ENCODE measurements at regions of chr6 and their contacts with region 1.

Region 1: DNA sequence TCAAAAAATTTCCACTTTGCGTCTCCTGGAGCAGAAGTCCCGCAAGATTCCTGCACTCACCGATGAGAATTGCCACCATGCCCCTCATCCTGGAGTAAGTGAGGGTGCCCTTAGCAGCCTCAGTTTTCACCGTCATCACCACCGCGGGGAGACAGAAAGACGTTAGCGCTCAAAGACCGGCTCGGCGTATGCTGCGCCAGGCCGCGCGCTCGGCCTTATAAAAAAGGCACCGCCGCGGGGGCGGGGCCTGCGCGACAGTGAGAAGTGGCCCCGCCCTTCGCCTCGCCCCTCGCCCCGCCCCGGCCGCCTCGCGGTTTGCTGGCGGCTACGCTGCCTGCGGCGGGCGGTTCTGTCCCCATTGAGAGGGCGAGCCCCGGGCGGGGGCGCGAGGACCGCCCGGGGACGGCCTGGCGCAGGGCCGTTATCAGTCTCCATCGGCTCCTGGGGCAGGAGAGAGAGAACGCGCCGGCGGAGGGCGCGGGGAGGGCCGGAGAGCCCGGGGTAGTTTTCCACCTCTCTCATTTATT is 122.3 kb upstream of the SLC2A12 start:
- DNase-seq: peak; percentile 94
- ATAC-seq: peak; percentile 83
- H3K4me3 Mint-ChIP-seq: peak overlapping the region; percentile 97
- H3K27ac Mint-ChIP-seq: peak overlapping the region; percentile 91
- H3K4me1 Mint-ChIP-seq: peaks cover 50% of the 10 kb centered on the region
- H3K27me3 Mint-ChIP-seq: no peaks in the 10 kb centered on the region
- CTCF ChIP-seq: no peak

Region 2: GRCh38 chr6:134041093-134041492 is 133.6 kb before region 1 on chr6:
- CTCF ChIA-PET with region 1: no interaction called
- POLR2A ChIA-PET with region 1: no interaction called
- intact Hi-C with region 1: no loop called
- DNase-seq: no peak
- ATAC-seq: no peak
- H3K4me3 Mint-ChIP-seq: no peak overlapping the region
- H3K27ac Mint-ChIP-seq: no peak overlapping the region
- H3K4me1 Mint-ChIP-seq: no peaks in the 10 kb centered on the region
- H3K27me3 Mint-ChIP-seq: peaks cover 12% of the 10 kb centered on the region
- CTCF ChIP-seq: no peak

Region 3: DNA sequence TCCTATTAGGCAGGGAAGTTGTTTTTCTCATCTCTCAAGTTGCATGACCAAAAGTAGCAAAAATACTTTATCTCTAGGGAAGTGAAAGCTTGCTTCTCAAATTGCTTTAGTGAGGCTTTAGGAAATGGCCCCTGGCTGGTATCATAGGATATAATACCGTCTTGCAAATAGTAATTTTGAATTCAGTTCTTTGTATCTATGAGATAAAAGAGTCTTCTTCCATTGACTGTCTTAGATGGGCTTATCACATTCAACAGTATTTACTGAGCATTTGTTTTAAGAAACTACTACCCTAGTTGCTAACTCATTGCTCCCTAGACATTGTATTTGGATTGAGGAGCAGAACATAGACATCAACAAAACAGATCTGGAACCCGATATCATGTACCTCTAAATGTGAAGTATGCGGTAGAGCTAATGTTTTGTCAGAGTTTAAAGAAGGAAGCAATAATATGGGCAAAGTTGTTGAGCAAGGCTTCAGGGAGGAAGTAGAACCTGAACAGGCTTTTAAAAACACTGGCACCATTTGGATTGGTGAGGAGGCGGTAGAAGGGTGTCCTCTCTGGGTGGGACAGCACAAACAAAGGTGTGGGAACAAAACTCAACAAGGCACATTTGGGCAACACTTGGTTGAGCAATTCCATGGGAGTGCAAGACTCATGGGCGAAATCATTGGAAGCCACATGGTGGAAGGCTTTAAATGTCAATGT is 41.7 kb after region 1 on chr6:
- CTCF ChIA-PET with region 1: no interaction called
- POLR2A ChIA-PET with region 1: interaction called, 3 read pairs
- intact Hi-C with region 1: loop called (anchors 5 kb)
- DNase-seq: no peak
- ATAC-seq: peak; percentile 74
- H3K4me3 Mint-ChIP-seq: peak overlapping the region; percentile 1
- H3K27ac Mint-ChIP-seq: peak overlapping the region; percentile 78
- H3K4me1 Mint-ChIP-seq: peaks cover 28% of the 10 kb centered on the region
- H3K27me3 Mint-ChIP-seq: no peaks in the 10 kb centered on the region
- CTCF ChIP-seq: no peak

Region 4: DNA sequence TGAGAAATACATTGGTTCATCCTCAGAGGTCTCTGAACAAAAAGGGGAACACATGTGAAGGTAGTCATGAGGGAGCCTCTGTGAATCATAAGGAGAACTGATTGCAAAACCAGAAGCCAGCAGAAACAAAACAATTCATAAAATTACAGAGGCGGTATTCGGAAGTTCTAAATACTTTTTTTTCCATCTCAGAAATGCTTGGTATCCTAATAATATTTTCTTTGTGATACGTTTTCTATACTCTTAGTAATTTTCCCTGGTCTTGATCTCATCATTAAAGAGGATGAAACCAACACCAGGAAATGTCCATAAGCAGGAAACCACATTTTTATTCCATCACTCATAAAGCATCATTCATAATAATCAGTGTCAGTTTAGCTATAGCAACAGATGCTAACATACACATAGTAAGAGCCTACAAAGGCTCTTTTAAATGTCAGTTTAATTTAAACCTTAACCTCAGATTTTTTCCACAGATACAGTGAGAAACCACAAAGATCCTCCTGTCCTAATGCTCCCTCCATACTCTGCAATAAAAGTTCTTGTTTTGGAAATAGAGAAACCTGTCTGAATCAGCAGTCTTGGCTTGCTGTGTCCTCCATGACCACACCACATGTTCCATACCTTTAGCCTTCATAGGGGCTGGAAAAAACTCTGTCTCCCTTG is 113.9 kb after region 1 on chr6:
- CTCF ChIA-PET with region 1: interaction called, 3 read pairs
- POLR2A ChIA-PET with region 1: interaction called, 3 read pairs
- intact Hi-C with region 1: loop called (anchors 1 kb)
- DNase-seq: no peak
- ATAC-seq: peak; percentile 83
- H3K4me3 Mint-ChIP-seq: peak overlapping the region; percentile 16
- H3K27ac Mint-ChIP-seq: peak overlapping the region; percentile 54
- H3K4me1 Mint-ChIP-seq: peaks cover 22% of the 10 kb centered on the region
- H3K27me3 Mint-ChIP-seq: no peaks in the 10 kb centered on the region
- CTCF ChIP-seq: no peak

Region 5: GRCh38 chr6:134398453-134398852 is 223.7 kb after region 1 on chr6:
- CTCF ChIA-PET with region 1: no interaction called
- POLR2A ChIA-PET with region 1: no interaction called
- intact Hi-C with region 1: loop called (anchors 5 kb)
- DNase-seq: no peak
- ATAC-seq: peak; percentile 89
- H3K4me3 Mint-ChIP-seq: no peak overlapping the region
- H3K27ac Mint-ChIP-seq: peak overlapping the region; percentile 83
- H3K4me1 Mint-ChIP-seq: peaks cover 20% of the 10 kb centered on the region
- H3K27me3 Mint-ChIP-seq: no peaks in the 10 kb centered on the region
- CTCF ChIP-seq: no peak

Region 6: GRCh38 chr6:134640975-134641429 is 466.3 kb after region 1 on chr6:
- CTCF ChIA-PET with region 1: interaction called, 88 read pairs
- POLR2A ChIA-PET with region 1: interaction called, 20 read pairs
- intact Hi-C with region 1: loop called (anchors 1 kb)
- DNase-seq: peak; percentile 52
- ATAC-seq: peak; percentile 96
- H3K4me3 Mint-ChIP-seq: no peak overlapping the region
- H3K27ac Mint-ChIP-seq: no peak overlapping the region
- H3K4me1 Mint-ChIP-seq: peaks cover 12% of the 10 kb centered on the region
- H3K27me3 Mint-ChIP-seq: no peaks in the 10 kb centered on the region
- CTCF ChIP-seq: peak; percentile 22

Region 7: GRCh38 chr6:134938896-134939295 is 764.2 kb after region 1 on chr6:
- CTCF ChIA-PET with region 1: interaction called, 14 read pairs
- POLR2A ChIA-PET with region 1: interaction called, 9 read pairs
- intact Hi-C with region 1: loop called (anchors 1 kb)
- DNase-seq: no peak
- ATAC-seq: peak; percentile 54
- H3K4me3 Mint-ChIP-seq: no peak overlapping the region
- H3K27ac Mint-ChIP-seq: no peak overlapping the region
- H3K4me1 Mint-ChIP-seq: peaks cover 3% of the 10 kb centered on the region
- H3K27me3 Mint-ChIP-seq: no peaks in the 10 kb centered on the region
- CTCF ChIP-seq: no peak

Region 8: GRCh38 chr6:135438907-135439535 is 1264.3 kb after region 1 on chr6:
- CTCF ChIA-PET with region 1: no interaction called
- POLR2A ChIA-PET with region 1: no interaction called
- intact Hi-C with region 1: loop called (anchors 5 kb)
- DNase-seq: no peak
- ATAC-seq: peak; percentile 25
- H3K4me3 Mint-ChIP-seq: no peak overlapping the region
- H3K27ac Mint-ChIP-seq: no peak overlapping the region
- H3K4me1 Mint-ChIP-seq: peaks cover 22% of the 10 kb centered on the region
- H3K27me3 Mint-ChIP-seq: no peaks in the 10 kb centered on the region
- CTCF ChIP-seq: no peak

Measured in activated B cell treated with CpG ODN at 0.5 μM for 24 hours (primary cell).